ENCODE measurements at regions of chr18 and their contacts with region 1.

Region 1: DNA sequence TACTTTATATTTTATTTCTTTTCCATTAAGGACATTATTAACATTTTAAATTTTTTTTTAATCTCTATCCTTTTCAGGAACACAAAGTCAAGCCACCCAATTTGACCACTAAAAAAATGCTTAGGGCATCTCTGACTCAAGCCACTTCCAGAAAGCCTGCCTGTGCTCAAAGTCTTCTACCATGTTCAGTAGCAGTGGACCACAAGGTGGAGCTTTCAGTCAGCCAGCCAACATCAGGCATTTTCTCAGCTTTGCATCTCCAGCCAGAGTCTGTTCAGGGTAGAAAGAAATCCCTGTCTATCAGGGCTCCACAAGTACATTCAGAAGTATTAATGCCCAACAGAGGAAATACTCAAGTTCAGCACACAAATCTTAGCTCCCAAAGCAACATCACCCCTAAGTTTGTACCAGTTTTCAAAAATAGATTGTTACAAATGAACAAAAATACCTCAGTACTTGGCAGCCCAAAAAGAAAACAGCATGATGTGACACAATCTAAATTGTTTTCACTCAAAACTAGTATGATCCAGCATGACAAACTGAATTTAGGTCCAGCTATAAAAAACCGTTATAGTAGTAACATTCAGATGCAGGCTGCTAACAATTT is 37.6 kb downstream of the C18orf63 start:
- DNase-seq: peak; percentile 74
- ATAC-seq: peak; percentile 97
- H3K4me3 ChIP-seq: no peak overlapping the region
- H3K27ac ChIP-seq: no peak overlapping the region
- H3K4me1 ChIP-seq: peaks cover 2% of the 10 kb centered on the region
- H3K27me3 ChIP-seq: peaks cover 9% of the 10 kb centered on the region
- CTCF ChIP-seq: peak; percentile 69
- POLR2A ChIP-seq: no peak
- RAD21 ChIP-seq: peak; percentile 72

Region 2: DNA sequence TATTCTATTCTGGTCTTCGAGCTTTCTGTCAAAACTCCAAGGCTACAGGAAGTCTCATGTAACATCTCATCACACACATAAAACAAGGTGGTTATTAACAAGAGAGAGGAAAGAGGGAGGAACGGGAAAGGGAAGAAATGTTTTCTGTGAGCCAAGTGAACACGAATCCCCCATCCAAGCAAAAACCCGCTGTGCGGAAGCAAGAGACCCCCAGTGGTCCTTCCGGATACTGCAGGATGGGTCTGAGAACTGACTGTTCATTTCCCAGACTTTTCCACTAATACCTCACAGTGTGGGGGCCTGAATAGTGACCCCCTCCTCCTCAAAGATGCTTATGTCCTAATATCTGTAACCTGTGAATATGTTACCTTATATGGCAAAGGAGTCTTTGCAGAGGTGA is 122.9 kb after region 1 on chr18:
- CTCF ChIA-PET with region 1: no interaction called
- POLR2A ChIA-PET with region 1: no interaction called
- dilution Hi-C with region 1: no loop called
- in situ Hi-C with region 1: loop called (anchors 10 kb)
- intact Hi-C with region 1: loop called (anchors 5 kb)
- DNase-seq: peak; percentile 8
- ATAC-seq: peak; percentile 65
- H3K4me3 ChIP-seq: no peak overlapping the region
- H3K27ac ChIP-seq: no peak overlapping the region
- H3K4me1 ChIP-seq: no peaks in the 10 kb centered on the region
- H3K27me3 ChIP-seq: peaks cover 18% of the 10 kb centered on the region
- CTCF ChIP-seq: peak; percentile 50
- POLR2A ChIP-seq: no peak
- RAD21 ChIP-seq: peak; percentile 42

Region 3: DNA sequence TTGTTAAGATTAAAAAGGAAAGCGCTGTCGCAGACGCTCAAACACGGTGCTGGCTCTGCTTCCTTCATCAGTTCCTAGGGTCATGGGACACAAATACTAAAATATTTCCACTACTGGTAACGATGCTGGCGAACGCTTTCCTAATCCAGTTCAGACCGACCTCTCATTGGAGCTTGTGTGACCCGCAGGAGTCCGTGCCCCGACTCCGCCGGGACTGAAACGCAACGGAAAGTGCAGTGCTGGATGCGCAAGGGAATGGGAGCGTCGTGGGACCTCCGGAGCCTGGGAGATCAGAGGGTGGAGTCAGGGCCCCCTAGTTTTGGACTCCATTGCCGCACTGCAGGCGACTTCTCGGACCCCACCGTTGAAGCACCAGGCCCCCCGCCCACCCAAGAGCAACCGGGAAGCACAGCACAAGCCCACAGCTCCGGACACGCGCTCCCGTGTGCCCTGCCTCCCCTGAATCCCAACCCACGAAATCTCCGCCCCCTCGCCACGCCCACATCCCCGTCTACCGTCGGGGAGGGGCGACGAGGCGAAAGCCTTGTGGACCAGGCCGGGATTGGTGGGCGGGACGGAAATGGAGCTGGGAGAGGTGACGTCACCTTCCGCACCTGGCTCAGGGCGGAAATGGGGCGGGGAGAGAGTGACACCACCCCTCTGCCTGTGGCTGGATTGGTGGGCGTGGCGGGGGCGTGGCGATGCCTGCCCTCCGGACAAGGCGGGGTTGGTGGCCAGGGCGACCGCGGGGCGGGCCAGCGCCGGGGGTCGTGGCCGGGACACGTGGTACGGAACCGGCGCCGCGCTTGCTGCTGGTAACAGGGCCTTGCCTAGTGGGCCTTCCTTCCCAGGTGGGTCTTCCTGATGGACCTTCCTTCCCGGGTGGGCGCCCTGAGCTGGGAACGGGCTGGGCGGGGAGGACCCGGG is 142.6 kb after region 1 on chr18 and contains the start of gene CNDP2:
- CTCF ChIA-PET with region 1: interaction called, 20 read pairs
- POLR2A ChIA-PET with region 1: no interaction called
- dilution Hi-C with region 1: no loop called
- in situ Hi-C with region 1: no loop called
- intact Hi-C with region 1: loop called (anchors 1 kb)
- DNase-seq: peak; percentile 98
- ATAC-seq: peak; percentile 94
- H3K4me3 ChIP-seq: peak within 1 kb of the TSS; percentile 79
- H3K27ac ChIP-seq: peak within 1 kb of the TSS; percentile 61
- H3K4me1 ChIP-seq: peaks cover 5% of the 10 kb centered on the region; the same call in 1 of the 2 replicates
- H3K27me3 ChIP-seq: peaks cover 2% of the 10 kb centered on the region; the same call in 1 of the 2 replicates
- CTCF ChIP-seq: no peak
- POLR2A ChIP-seq: peak; percentile 64; the same call in 1 of the 2 replicates
- RAD21 ChIP-seq: no peak
- total RNA-seq, gene CNDP2: 52.0 and 52.2 TPM in 2 replicates